Activated T-helper 2 cell treated with anti-CD3 and anti-CD28 coated beads, Interferon-gamma antibody, Interleukin-2, Interleukin-4, amounts not matched to agents 10 μg/mL and 5 μg/mL and 100 μg/mL, durations not matched to agents 14 hours and 24 hours and 36 hours (primary cell): ENCODE measurements at regions of chr6 and their contacts with region 1.

Region 1: DNA sequence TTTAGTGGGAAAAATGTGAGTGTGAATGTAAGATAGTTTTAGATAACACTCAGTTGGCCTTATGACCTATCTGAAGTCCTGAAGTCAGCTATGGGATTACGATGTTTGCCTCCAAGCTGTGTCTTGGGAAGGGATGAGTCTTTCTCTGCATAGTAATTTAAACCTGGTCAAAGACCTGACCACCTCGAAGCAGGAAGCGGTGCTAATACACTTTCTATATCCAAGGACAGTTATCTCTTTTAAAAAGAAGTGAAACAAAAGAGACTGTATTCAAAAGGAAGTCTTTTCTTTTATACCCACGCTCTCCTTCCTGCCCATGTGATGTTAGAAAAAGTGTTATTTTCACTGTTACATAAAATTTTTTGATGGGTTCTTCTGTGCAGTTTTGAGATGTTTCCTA is 94.9 kb downstream of the JARID2 start:
- DNase-seq: no peak
- H3K4me3 Mint-ChIP-seq: peak overlapping the region; percentile 51
- H3K27ac Mint-ChIP-seq: peak overlapping the region; percentile 76
- H3K4me1 Mint-ChIP-seq: peaks cover 69% of the 10 kb centered on the region
- H3K27me3 Mint-ChIP-seq: no peaks in the 10 kb centered on the region

Region 2: GRCh38 chr6:15389765-15390723 is 49.3 kb after region 1 on chr6:
- intact Hi-C with region 1: loop called (anchors 5 kb)
- DNase-seq: no peak
- H3K4me3 Mint-ChIP-seq: no peak overlapping the region
- H3K27ac Mint-ChIP-seq: peak overlapping the region; percentile 33
- H3K4me1 Mint-ChIP-seq: peaks cover 79% of the 10 kb centered on the region
- H3K27me3 Mint-ChIP-seq: no peaks in the 10 kb centered on the region